ENCODE measurements at regions of chr7 and their contacts with region 1.

Region 1: GRCh38 chr7:24819916-24820689 is 62.8 kb upstream of the GSDME start:
- DNase-seq: peak; percentile 71
- H3K4me3 Mint-ChIP-seq: peak overlapping the region; percentile 69
- H3K27ac Mint-ChIP-seq: peak overlapping the region; percentile 97
- H3K4me1 Mint-ChIP-seq: peaks cover 43% of the 10 kb centered on the region
- H3K27me3 Mint-ChIP-seq: no peaks in the 10 kb centered on the region

Region 2: GRCh38 chr7:24597014-24597413 is 223.1 kb before region 1 on chr7:
- intact Hi-C with region 1: no loop called
- DNase-seq: no peak
- H3K4me3 Mint-ChIP-seq: no peak overlapping the region
- H3K27ac Mint-ChIP-seq: no peak overlapping the region
- H3K4me1 Mint-ChIP-seq: peaks cover 10% of the 10 kb centered on the region
- H3K27me3 Mint-ChIP-seq: no peaks in the 10 kb centered on the region

Region 3: GRCh38 chr7:24869572-24869971 is 49.5 kb after region 1 on chr7:
- intact Hi-C with region 1: loop called (anchors 1 kb)
- DNase-seq: no peak
- H3K4me3 Mint-ChIP-seq: no peak overlapping the region
- H3K27ac Mint-ChIP-seq: no peak overlapping the region
- H3K4me1 Mint-ChIP-seq: peaks cover 46% of the 10 kb centered on the region
- H3K27me3 Mint-ChIP-seq: no peaks in the 10 kb centered on the region

Region 4: GRCh38 chr7:24921362-24921679 is 101.2 kb after region 1 on chr7:
- intact Hi-C with region 1: loop called (anchors 1 kb)
- DNase-seq: no peak
- H3K4me3 Mint-ChIP-seq: peak overlapping the region; percentile 41
- H3K27ac Mint-ChIP-seq: peak overlapping the region; percentile 91
- H3K4me1 Mint-ChIP-seq: peaks cover 93% of the 10 kb centered on the region
- H3K27me3 Mint-ChIP-seq: no peaks in the 10 kb centered on the region

Region 5: GRCh38 chr7:24979863-24980533 is 159.9 kb after region 1 on chr7 and contains the start of gene OSBPL3:
- intact Hi-C with region 1: loop called (anchors 1 kb)
- DNase-seq: peak; percentile 92
- H3K4me3 Mint-ChIP-seq: peak within 1 kb of the TSS; percentile 95
- H3K27ac Mint-ChIP-seq: peak within 1 kb of the TSS; percentile 97
- H3K4me1 Mint-ChIP-seq: peaks cover 60% of the 10 kb centered on the region
- H3K27me3 Mint-ChIP-seq: no peaks in the 10 kb centered on the region
- total RNA-seq, gene OSBPL3: 74.2 and 76.2 TPM in 2 replicates

Region 6: DNA sequence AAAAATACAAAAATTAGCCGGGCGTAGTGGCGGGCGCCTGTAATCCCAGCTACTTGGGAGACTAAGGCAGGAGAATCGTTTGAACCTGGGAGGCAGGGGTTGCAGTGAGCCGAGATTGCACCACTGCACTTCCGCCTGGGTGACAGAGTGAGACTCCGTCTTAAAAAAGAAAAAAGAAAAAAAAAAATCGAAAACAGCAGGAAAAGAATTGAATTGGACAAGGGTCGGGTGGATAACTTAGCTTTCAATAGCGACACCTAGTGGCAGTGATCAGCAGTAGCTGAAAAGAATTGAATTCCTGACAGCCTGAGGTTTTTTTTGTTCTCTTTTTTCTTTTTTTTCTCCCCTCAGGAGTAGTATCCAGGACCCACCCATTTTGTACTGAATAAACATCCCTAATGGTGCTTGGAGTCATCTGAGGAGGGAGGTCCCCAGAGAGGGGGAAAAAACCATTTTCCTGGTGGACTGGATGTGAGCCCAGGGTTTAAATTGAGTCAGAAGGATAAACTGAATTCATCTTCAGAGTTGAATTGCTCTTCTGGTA is 249.9 kb after region 1 on chr7:
- intact Hi-C with region 1: loop called (anchors 1 kb)
- DNase-seq: peak; percentile 20
- H3K4me3 Mint-ChIP-seq: no peak overlapping the region
- H3K27ac Mint-ChIP-seq: no peak overlapping the region
- H3K4me1 Mint-ChIP-seq: peaks cover 29% of the 10 kb centered on the region
- H3K27me3 Mint-ChIP-seq: no peaks in the 10 kb centered on the region